A673 (cell line): ENCODE measurements at regions of chr14 and their contacts with region 1.

Region 1: DNA sequence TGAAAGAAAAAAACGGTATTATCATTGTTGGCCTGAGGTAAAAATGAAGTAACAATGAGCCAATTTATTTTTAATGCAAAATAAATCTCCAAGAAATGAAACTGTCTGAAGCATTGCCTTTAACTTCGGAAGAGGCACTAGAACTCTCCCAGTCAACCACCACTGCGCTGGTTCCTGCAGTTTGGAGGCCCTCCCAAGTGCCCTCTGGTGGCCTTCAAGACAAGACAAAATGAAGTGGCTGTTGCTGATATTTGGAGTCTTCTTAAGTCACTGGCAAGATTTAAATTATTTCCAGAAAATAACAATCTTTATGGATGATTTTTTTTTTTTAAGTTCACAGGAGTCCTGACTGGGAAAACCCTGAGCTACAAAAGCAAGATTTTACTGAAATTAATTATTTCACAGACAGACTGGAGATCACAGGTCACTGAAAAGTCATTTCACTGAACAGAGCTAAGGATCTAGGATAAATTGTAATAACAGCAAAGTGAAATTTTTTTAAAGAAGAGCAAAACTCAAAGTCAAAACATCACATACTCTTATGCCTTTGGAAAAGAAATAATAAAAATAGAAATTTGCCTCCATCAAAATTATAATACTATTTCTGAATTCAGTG is 58.2 kb downstream of the DICER1 start:
- DNase-seq: peak; percentile 86
- H3K4me3 ChIP-seq: no peak overlapping the region
- H3K27ac ChIP-seq: no peak overlapping the region
- H3K4me1 ChIP-seq: peaks cover 52% of the 10 kb centered on the region
- H3K27me3 ChIP-seq: no peaks in the 10 kb centered on the region
- CTCF ChIP-seq: peak; percentile 89

Region 2: DNA sequence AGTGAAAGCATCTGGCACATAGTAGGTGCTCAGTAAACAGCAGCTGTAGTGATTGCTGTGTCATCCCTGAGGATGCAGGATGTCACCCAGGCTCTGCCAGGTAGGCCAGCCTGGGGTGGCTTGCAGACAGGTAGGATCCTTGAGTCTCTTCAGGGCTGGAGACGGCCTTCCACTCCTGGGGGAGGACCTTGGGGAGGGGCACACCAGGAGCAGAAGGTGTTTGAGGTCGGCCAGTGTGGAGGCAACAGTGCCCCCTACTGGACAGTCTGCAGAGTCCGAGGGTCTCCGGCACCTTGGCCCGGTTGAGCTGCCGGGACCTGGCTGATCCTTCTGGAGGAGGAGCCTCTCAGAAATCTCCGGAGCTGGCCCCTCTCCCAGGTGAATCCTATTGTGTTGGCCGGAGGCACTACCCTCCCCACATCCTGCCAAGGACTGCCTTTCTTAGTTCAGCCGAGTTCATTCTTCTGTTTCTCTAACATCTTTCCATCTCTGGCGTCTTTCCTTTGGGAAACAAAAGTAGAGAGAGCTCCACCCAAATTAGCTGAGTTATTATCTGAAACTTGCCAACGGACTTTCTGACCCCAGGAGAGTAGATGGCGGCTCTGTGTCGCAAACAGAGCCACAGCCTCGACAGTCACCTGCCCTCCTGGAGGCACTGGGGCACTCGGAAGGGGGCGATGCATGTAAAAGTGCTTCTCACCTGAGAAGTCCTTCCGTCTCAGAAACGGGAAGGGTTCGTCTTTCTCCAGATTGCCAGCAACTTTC is 262.5 kb after region 1 on chr14:
- CTCF ChIA-PET with region 1: no interaction called
- POLR2A ChIA-PET with region 1: no interaction called
- intact Hi-C with region 1: loop called (anchors 10 kb)
- DNase-seq: peak; percentile 54
- H3K4me3 ChIP-seq: no peak overlapping the region
- H3K27ac ChIP-seq: no peak overlapping the region
- H3K4me1 ChIP-seq: no peaks in the 10 kb centered on the region
- H3K27me3 ChIP-seq: no peaks in the 10 kb centered on the region
- CTCF ChIP-seq: peak; percentile 86